Ascending aorta (tissue), 2 donors: ENCODE measurements at regions of chr20 and their contacts with region 1.

Region 1: GRCh38 chr20:20017001-20017843 is at the start of gene NAA20:
- DNase-seq: peak; percentile 58 to 95
- H3K4me3 ChIP-seq: peak within 1 kb of the TSS; percentile 95 to 100
- H3K27ac ChIP-seq: peak within 1 kb of the TSS; percentile 71 to 74
- H3K4me1 ChIP-seq: peaks cover 17 to 19% of the 10 kb centered on the region in 2 donors
- H3K27me3 ChIP-seq: no peaks in the 10 kb centered on the region
- CTCF ChIP-seq: peak; percentile 78 to 92 (median 85)
- total RNA-seq, gene NAA20: 2.7 TPM

Region 2: DNA sequence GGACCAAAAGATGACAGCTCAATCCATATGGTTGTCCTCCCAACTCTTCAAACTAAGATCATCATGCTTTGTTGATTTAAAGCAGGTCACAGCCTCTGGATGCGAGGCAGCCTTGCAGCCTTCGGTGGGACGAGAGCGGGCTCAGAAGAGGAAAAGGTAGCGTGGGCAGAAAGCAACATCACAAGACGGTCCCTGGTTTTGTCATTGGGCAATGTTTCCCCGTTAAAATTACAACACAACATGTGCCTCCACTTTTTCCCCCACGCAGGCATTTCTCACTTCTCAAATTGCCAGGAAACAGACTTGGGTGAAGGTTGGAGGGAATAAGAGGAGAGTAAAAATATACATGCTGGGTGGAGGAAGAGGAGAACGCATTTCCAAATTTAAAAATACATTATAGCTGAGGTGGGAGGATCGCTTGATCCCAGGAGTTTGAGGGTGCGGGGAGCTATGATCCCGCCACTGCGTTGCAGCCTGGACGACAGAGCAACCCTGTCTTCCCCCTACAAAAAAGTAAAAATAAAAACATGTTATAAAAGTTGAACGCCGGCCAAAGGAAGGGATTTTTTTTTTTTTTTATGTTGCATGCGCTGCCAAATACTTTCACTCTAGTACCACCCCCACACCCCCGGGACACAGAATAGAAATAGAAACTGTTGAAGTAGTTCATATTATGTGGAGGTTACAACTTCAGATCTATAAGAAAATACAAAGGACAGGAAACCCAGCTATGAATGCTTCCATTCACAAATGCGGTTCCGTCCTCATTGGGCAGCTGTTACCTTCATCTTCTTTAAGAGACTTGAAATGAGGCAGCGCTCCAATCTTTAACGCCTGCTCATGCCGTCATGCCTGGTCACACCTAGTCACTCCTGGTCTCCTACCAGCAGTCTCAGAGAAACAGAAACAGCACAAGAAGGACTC is 13.9 kb before region 1 on chr20:
- intact Hi-C with region 1: loop called (anchors 2 kb)
- DNase-seq: peak; percentile 39 to 79
- H3K4me3 ChIP-seq: peak overlapping the region; percentile 38 to 50
- H3K27ac ChIP-seq: peak overlapping the region; percentile 73 to 83
- H3K4me1 ChIP-seq: peaks cover 0 to 22% of the 10 kb centered on the region in 2 donors
- H3K27me3 ChIP-seq: no peaks in the 10 kb centered on the region
- CTCF ChIP-seq: no peak